HepG2 (cell line): ENCODE measurements at regions of chr1 and their contacts with region 1.

Region 1: GRCh38 chr1:207077470-207078377 is 10.9 kb upstream of the C4BPB start:
- DNase-seq: peak; percentile 71
- ATAC-seq: peak; percentile 88
- H3K4me3 ChIP-seq: no peak overlapping the region
- H3K27ac ChIP-seq: no peak overlapping the region
- H3K4me1 ChIP-seq: 0 out of 2 replicates have a peak, but pooled peaks cover 6% of the 10 kb centered on the region
- H3K27me3 ChIP-seq: no peaks in the 10 kb centered on the region
- CTCF ChIP-seq: peak; percentile 92
- EP300 ChIP-seq: no peak
- POLR2A ChIP-seq: no peak
- RAD21 ChIP-seq: peak; percentile 78

Region 2: GRCh38 chr1:206734499-206735142 is 343.1 kb before region 1 on chr1:
- CTCF ChIA-PET with region 1: no interaction called
- POLR2A ChIA-PET with region 1: no interaction called
- in situ Hi-C with region 1: no loop called
- intact Hi-C with region 1: loop called (anchors 10 kb)
- DNase-seq: no peak
- ATAC-seq: peak; percentile 66
- H3K4me3 ChIP-seq: no peak overlapping the region
- H3K27ac ChIP-seq: no peak overlapping the region
- H3K4me1 ChIP-seq: no peaks in the 10 kb centered on the region
- H3K27me3 ChIP-seq: no peaks in the 10 kb centered on the region
- CTCF ChIP-seq: peak; percentile 70
- EP300 ChIP-seq: no peak
- POLR2A ChIP-seq: no peak
- RAD21 ChIP-seq: peak; percentile 41; the same call in 1 of the 2 replicates

Region 3: GRCh38 chr1:206935491-206936067 is 142.1 kb before region 1 on chr1:
- CTCF ChIA-PET with region 1: interaction called, 9 read pairs
- POLR2A ChIA-PET with region 1: no interaction called
- in situ Hi-C with region 1: loop called (anchors 10 kb)
- intact Hi-C with region 1: loop called (anchors 1 kb)
- DNase-seq: peak; percentile 69
- ATAC-seq: peak; percentile 99
- H3K4me3 ChIP-seq: no peak overlapping the region
- H3K27ac ChIP-seq: no peak overlapping the region
- H3K4me1 ChIP-seq: no peaks in the 10 kb centered on the region
- H3K27me3 ChIP-seq: peaks cover 2 to 6% of the 10 kb centered on the region in 2 experiments; a peak in 3 of 5 replicates
- CTCF ChIP-seq: peak; percentile 96
- EP300 ChIP-seq: no peak
- POLR2A ChIP-seq: no peak
- RAD21 ChIP-seq: peak; percentile 93